ENCODE measurements at regions of chr7 and their contacts with region 1.

Region 1: DNA sequence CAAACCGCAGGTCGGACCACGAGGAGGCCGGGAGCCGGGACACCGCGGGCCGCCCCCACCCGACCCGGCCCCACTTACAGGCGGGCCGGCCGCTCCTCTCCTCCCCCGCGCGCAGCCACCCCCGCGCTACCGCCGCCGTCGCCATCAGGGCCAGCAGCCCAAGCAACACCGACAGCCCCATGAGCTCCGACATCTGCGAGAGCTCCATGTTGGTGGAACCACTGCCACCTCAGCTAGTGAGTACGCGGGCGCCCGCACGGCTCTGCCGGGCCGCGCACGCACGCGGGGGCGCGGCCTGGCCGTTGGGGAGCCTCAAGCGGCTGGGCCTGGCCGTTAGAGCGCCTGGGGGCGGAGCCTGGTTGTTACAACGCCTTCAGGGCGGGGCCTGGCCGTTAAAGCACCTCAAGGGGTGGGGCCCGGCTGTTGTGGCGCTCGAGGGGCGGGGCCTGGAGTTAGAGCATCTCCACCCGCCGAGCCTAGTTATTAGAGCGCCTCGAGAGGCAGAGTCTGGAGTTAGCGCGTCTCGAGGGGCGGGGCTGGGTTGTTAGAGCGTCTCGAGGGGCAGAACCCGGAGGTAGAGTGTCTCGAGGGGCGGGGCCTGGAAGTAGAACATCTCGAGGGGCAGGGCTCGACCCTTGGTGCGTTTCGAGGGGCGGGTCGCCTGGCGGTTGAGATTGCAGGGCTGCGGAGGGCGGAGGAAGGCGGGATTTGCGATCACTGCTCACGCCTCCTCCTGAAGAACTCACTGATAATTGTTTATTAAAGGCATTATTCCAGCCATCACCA is at the start of gene TBL2:
- H3K4me3 Mint-ChIP-seq: peak within 1 kb of the TSS; percentile 84
- H3K27ac Mint-ChIP-seq: peak within 1 kb of the TSS; percentile 96
- H3K4me1 Mint-ChIP-seq: peaks cover 48% of the 10 kb centered on the region
- H3K27me3 Mint-ChIP-seq: no peaks in the 10 kb centered on the region

Region 2: DNA sequence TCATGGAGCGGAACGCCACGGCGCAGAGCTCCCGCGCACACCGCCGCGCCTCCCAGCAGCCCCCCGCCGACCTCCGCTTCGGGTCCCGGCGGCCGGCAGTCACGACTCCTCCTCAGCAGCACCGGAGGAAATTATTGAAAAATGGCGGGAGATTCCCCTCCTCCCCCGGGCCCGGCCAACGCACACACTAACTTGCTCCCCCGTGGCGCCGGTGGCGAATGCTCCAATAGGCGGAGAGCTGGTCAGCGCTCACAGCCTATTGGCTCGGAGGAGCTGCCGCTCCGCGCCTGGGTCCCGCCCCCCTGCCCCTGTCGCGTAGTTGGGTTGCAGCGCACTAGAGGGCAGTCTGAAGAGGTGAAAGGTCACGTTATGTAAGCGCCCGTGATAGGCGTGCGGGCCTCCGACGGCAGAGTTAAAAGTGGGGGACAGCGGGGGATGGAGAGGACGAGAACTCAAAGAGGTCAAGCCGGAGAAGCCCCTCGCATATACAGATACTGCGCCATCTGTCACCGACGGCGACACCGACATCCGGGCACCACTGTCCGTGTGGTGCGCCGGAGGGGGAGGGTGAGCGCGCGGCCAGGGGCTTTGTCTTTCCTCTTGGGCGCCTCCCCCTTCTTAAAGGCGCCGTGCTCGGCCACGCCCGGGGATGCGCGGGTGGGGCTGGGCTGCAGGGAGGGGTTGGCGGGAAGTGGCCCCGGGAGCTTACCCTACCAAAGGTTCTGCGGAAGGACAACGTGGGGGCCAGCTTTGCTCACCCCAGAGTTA is 56.2 kb before region 1 on chr7 and contains the start of gene BAZ1B:
- intact Hi-C with region 1: loop called (anchors 1 kb)
- H3K4me3 Mint-ChIP-seq: peak within 1 kb of the TSS; percentile 83
- H3K27ac Mint-ChIP-seq: peak within 1 kb of the TSS; percentile 96
- H3K4me1 Mint-ChIP-seq: peaks cover 60% of the 10 kb centered on the region
- H3K27me3 Mint-ChIP-seq: no peaks in the 10 kb centered on the region

Region 3: GRCh38 chr7:73557108-73557396 is 21.5 kb before region 1 on chr7:
- intact Hi-C with region 1: loop called (anchors 1 kb)
- H3K4me3 Mint-ChIP-seq: peak overlapping the region; percentile 94
- H3K27ac Mint-ChIP-seq: peak overlapping the region; percentile 97
- H3K4me1 Mint-ChIP-seq: peaks cover 46% of the 10 kb centered on the region
- H3K27me3 Mint-ChIP-seq: peaks cover 4% of the 10 kb centered on the region

Measured in dendritic cell treated with granulocyte-macrophage colony-stimulating factor and Interleukin-4, amounts not matched to agents 40 ng/mL and 50 ng/mL, for 4 days (primary cell).